ENCODE measurements at regions of chr17 and their contacts with region 1.

Region 1: DNA sequence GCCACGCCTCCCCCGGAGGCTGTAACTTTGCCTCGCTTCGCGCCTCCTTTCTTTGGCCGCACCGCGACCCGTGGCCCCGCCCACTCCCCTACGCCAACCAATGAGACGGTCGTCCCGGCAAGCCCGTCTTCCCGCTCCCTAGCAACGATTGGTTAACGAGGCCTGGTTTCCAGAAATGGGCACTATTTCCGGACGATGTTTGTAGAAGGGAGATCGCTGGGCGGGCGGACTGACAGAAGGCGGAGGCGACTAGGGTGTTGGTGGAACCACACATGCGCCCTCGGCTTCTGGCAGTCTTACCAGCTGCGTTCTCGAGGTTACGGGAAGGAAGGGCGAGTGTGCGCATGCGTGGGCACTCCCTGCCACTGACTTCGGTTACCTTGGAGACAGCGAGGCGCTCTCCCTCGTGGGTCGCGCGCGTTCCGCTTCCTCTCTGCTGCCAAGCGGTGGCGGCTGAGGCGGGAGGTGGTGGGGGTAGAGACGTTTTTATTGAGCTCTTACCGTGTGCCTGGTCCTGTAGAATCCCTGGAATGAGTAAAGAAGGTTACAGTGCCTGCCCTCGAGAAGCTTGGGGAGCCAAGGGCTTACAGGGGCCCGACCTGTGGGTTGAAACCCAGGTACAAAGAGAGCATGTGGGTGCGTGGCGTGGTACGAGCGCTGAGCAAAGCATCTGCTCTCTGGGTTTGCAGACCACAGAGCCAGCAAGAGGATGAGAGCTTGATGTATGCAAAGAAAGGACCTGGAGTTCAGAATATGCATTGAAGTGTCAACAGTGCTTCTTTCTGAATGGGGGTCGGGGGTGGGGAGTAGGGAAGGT is 500 bp upstream of the MAP3K14 start:
- DNase-seq: peak; percentile 98 to 100 (median 98)
- ATAC-seq: peak; percentile 91
- H3K4me3 ChIP-seq: peak overlapping the region; percentile 64
- H3K27ac ChIP-seq: peak overlapping the region; percentile 85
- H3K4me1 ChIP-seq: peaks cover 53 to 74% of the 10 kb centered on the region in 2 experiments
- H3K27me3 ChIP-seq: no peaks in the 10 kb centered on the region
- CTCF ChIP-seq: 0 out of 6 replicates have a peak, but pooled peaks of 1 of the 3 experiments have one; percentile 0
- EP300 ChIP-seq: no peak
- POLR2A ChIP-seq: peak; percentile 78
- RAD21 ChIP-seq: no peak

Region 2: GRCh38 chr17:45332989-45333701 is 15.8 kb after region 1 on chr17:
- CTCF ChIA-PET with region 1: no interaction called
- POLR2A ChIA-PET with region 1: interaction called, 15 read pairs
- in situ Hi-C with region 1: no loop called
- intact Hi-C with region 1: loop called (anchors 2 kb)
- DNase-seq: peak; percentile 73 to 96 (median 84)
- ATAC-seq: peak; percentile 96
- H3K4me3 ChIP-seq: no peak overlapping the region
- H3K27ac ChIP-seq: peak overlapping the region; percentile 86
- H3K4me1 ChIP-seq: peaks cover 52% of the 10 kb centered on the region in 2 experiments
- H3K27me3 ChIP-seq: no peaks in the 10 kb centered on the region
- CTCF ChIP-seq: no peak
- EP300 ChIP-seq: peak; percentile 91
- POLR2A ChIP-seq: no peak
- RAD21 ChIP-seq: peak; percentile 30 to 38; a peak in 3 of 4 replicates

Region 3: DNA sequence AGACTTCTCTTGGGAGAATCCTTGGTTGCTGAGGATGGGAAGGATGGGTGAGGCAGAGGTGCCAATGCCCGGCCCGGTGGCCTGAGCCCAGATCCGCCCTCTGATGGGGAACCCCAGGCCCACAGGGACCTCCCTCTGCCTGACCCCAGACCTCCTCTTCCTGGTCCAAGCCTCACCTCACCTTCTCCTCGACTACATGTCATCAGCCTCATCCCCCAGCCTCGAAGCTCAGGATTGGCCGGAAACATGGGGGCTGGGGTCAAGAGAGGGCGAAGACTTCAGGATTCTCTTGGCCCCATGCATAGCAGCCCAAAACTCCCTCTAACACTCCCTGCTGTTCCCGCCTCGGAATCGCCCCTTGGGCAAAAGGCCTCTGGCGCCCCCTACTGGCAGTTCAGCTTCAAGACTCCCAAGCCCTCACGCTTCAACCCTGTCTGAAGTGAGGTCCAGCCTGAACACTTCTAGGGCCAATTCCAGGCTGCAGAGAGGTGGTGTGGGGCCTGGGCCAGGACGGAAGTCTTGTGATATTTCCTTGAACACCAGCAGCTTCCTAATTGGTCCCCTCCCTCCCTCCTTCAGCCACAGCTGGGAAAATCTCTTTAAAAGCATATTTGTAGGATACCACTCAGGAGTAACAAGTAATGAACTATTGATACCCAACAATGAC is 68.1 kb after region 1 on chr17:
- CTCF ChIA-PET with region 1: no interaction called
- POLR2A ChIA-PET with region 1: no interaction called
- in situ Hi-C with region 1: no loop called
- intact Hi-C with region 1: loop called (anchors 5 kb)
- DNase-seq: peak; percentile 85 to 92 (median 86)
- ATAC-seq: peak; percentile 99
- H3K4me3 ChIP-seq: no peak overlapping the region
- H3K27ac ChIP-seq: no peak overlapping the region
- H3K4me1 ChIP-seq: peaks cover 21 to 22% of the 10 kb centered on the region in 2 experiments
- H3K27me3 ChIP-seq: peaks cover 0 to 14% of the 10 kb centered on the region in 2 experiments; a peak in 3 of 5 replicates
- CTCF ChIP-seq: peak; percentile 96 to 99 (median 98)
- EP300 ChIP-seq: 0 out of 2 replicates have a peak, but pooled peaks have one; percentile 8
- POLR2A ChIP-seq: no peak
- RAD21 ChIP-seq: peak; percentile 99

Measured in K562 (cell line).